Endothelial cell of umbilical vein (primary cell): ENCODE measurements at regions of chr6 and their contacts with region 1.

Region 1: DNA sequence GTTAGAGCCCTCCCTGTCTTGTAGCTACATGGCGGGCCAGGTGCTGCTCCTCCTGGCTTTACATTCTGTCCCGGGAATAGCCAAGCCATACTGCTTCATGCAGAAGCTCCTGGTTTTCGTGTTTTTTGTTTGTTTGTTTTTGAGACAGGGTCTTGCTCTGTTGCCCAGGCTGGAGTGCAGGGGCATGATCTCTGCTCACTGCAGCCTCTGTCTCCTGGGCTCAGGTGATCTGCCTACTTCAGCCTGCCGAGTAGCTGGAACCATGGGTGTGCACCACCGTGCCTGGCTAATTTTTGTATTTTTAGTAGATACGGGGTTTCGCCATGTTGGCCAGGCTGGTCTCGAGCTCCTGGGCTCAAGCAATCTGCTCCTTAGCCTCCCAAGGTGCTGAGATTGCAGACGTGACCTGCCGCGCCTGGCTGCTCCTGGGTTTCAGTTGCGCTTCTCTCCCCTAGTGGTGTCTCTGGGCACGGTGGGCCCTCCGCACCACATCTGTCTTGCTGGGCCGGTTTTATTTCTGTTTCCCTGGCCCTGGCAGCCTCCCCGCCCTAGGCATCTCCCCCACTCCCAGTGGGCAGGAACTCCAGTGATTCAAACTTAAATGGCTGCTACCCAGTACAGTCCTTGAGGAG is 12.9 kb downstream of the CDYL start:
- DNase-seq: no peak
- H3K4me3 ChIP-seq: no peak overlapping the region
- H3K27ac ChIP-seq: no peak overlapping the region
- H3K4me1 ChIP-seq: no peaks in the 10 kb centered on the region
- H3K27me3 ChIP-seq: no peaks in the 10 kb centered on the region
- CTCF ChIP-seq: no peak
- POLR2A ChIP-seq: no peak

Region 2: GRCh38 chr6:4805553-4806336 is 16.7 kb after region 1 on chr6:
- CTCF ChIA-PET with region 1: interaction called, 13 read pairs
- POLR2A ChIA-PET with region 1: no interaction called
- dilution Hi-C with region 1: no loop called
- intact Hi-C with region 1: no loop called
- DNase-seq: peak; percentile 41
- H3K4me3 ChIP-seq: no peak overlapping the region
- H3K27ac ChIP-seq: no peak overlapping the region
- H3K4me1 ChIP-seq: peaks cover 9% of the 10 kb centered on the region
- H3K27me3 ChIP-seq: no peaks in the 10 kb centered on the region
- CTCF ChIP-seq: peak; percentile 49 to 57
- POLR2A ChIP-seq: no peak